Tibial artery (tissue), 4 donors: ENCODE measurements at regions of chr10 and their contacts with region 1.

Region 1: GRCh38 chr10:111756217-111757061 is 427.1 kb downstream of the GPAM start:
- DNase-seq: peak; percentile 37 to 65
- H3K4me3 ChIP-seq: no peak overlapping the region
- H3K27ac ChIP-seq: no peak overlapping the region
- H3K4me1 ChIP-seq: no peaks in the 10 kb centered on the region
- H3K27me3 ChIP-seq: no peaks in the 10 kb centered on the region
- CTCF ChIP-seq: peak; percentile 52

Region 2: GRCh38 chr10:111716032-111716431 is 40.4 kb before region 1 on chr10:
- intact Hi-C with region 1: loop called (anchors 2 kb)
- DNase-seq: no peak
- H3K4me3 ChIP-seq: no peak overlapping the region
- H3K27ac ChIP-seq: no peak overlapping the region
- H3K4me1 ChIP-seq: no peaks in the 10 kb centered on the region
- H3K27me3 ChIP-seq: no peaks in the 10 kb centered on the region
- CTCF ChIP-seq: no peak

Region 3: GRCh38 chr10:112137154-112137987 is 380.9 kb after region 1 on chr10:
- intact Hi-C with region 1: loop called (anchors 5 kb)
- DNase-seq: peak; percentile 75 to 83
- H3K4me3 ChIP-seq: no peak overlapping the region
- H3K27ac ChIP-seq: no peak overlapping the region
- H3K4me1 ChIP-seq: no peaks in the 10 kb centered on the region
- H3K27me3 ChIP-seq: no peaks in the 10 kb centered on the region
- CTCF ChIP-seq: peak; percentile 83 to 87